ENCODE measurements at regions of chr17 and their contacts with region 1.

Region 1: DNA sequence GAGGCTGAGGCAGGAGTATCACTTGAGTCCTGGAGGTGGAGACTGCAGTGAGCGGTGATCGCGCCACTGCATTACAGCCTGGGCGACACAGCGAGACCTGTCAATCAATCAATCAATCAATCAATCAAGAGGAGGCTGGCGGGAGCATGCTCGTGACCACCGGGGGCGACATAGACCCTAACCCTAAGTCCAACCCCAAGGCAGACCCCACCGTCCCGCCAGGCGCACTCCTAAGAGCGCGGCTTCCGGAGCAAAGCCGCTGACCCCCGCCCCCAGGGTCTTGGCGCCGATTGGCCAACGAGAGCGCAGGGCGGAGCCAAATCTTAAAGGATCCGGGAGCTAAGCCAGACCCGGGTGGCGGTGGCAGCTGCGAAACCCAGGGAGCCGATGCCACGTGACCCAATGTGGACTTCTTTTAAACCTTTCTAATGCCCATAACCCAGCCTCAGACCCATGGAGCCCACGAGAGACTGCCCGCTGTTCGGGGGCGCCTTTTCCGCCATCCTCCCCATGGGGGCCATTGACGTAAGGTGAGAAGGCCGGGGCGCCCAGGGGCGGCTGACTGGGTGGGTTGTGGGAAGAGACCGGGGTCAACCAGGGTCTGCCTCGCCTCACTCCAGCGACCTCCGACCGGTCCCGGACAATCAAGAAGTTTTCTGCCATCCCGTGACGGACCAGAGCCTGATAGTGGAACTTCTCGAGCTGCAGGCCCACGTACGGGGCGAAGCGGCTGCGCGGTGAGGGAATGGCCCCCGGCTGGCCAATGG is at the start of gene RANGRF:
- DNase-seq: peak; percentile 32
- H3K4me3 ChIP-seq: peak within 1 kb of the TSS; percentile 58 to 82 (median 70)
- H3K27ac ChIP-seq: peak within 1 kb of the TSS; percentile 86 to 93 (median 92)
- H3K4me1 ChIP-seq: peaks cover 11 to 33% (median 12%) of the 10 kb centered on the region in 3 donors
- H3K27me3 ChIP-seq: no peaks in the 10 kb centered on the region
- CTCF ChIP-seq: no peak
- POLR2A ChIP-seq: peak in 3 of 4 donors; percentile 5 to 65 (median 43)
- total RNA-seq, gene RANGRF: 7.8 to 15.4 (median 12.6) TPM

Region 2: DNA sequence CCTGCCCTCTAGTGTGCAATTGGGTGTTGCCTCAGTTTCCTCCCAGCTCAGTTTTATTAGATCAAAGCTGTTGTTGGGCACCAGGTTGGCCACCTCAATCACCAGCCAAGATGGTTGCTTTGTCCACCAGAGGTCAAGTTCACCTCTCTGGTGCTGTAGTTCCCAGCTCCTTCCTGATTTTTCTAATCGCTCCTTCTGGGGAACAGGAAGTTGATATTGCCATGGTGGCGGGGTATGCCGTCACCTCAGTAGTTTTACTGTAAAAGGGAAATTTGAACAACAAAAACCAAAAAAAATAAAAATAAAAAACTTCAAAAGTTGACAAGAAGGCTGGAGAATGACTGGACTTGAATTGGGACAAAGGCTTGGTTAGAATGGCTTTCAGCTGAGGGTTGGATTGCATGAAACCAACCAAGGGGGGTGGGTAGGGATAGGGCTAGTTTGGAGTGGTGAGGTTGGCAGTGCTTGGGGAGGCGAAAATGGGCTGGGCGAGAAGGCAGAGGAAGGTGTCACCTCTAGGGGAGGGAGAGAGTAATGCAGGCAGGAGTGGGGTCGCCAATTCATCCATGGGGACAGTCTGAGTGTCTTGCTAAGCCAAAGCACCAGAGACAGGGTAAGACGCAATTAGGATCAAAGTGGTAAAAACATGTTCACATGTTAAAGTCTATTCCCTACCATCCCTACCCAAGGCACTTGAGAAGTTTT is 577.3 kb before region 1 on chr17:
- intact Hi-C with region 1: no loop called
- DNase-seq: no peak
- H3K4me3 ChIP-seq: no peak overlapping the region
- H3K27ac ChIP-seq: no peak overlapping the region
- H3K4me1 ChIP-seq: peaks cover under 1 to 3% (median under 1%) of the 10 kb centered on the region in 3 donors
- H3K27me3 ChIP-seq: peaks cover 0 to 100% (median 4%) of the 10 kb centered on the region in 4 donors
- CTCF ChIP-seq: peak in 1 of 6 experiments; percentile 24
- POLR2A ChIP-seq: no peak

Region 3: GRCh38 chr17:8237175-8237574 is 51.3 kb before region 1 on chr17:
- intact Hi-C with region 1: loop called (anchors 10 kb)
- DNase-seq: no peak
- H3K4me3 ChIP-seq: no peak overlapping the region
- H3K27ac ChIP-seq: no peak overlapping the region
- H3K4me1 ChIP-seq: no peaks in the 10 kb centered on the region
- H3K27me3 ChIP-seq: no peaks in the 10 kb centered on the region
- CTCF ChIP-seq: no peak
- POLR2A ChIP-seq: no peak

Region 4: GRCh38 chr17:8253800-8254199 is 34.7 kb before region 1 on chr17:
- intact Hi-C with region 1: loop called (anchors 5 kb)
- DNase-seq: no peak
- H3K4me3 ChIP-seq: no peak overlapping the region
- H3K27ac ChIP-seq: no peak overlapping the region
- H3K4me1 ChIP-seq: peaks cover 0 to 14% (median 7%) of the 10 kb centered on the region in 3 donors
- H3K27me3 ChIP-seq: no peaks in the 10 kb centered on the region
- CTCF ChIP-seq: no peak
- POLR2A ChIP-seq: no peak